Endothelial cell of umbilical vein (primary cell): ENCODE measurements at regions of chr2 and their contacts with region 1.

Region 1: GRCh38 chr2:158968396-158969161 is at the start of gene TANC1:
- DNase-seq: peak; percentile 90
- H3K4me3 ChIP-seq: peak within 1 kb of the TSS; percentile 80 to 89 (median 89)
- H3K27ac ChIP-seq: peak within 1 kb of the TSS; percentile 75
- H3K4me1 ChIP-seq: peaks cover 36% of the 10 kb centered on the region
- H3K27me3 ChIP-seq: no peaks in the 10 kb centered on the region
- CTCF ChIP-seq: no peak
- POLR2A ChIP-seq: peak; percentile 96
- total RNA-seq, gene TANC1: 86.3 and 99.4 TPM in 2 replicates

Region 2: GRCh38 chr2:158586491-158586890 is 382.1 kb before region 1 on chr2:
- CTCF ChIA-PET with region 1: no interaction called
- POLR2A ChIA-PET with region 1: no interaction called
- dilution Hi-C with region 1: no loop called
- intact Hi-C with region 1: no loop called
- DNase-seq: no peak
- H3K4me3 ChIP-seq: no peak overlapping the region
- H3K27ac ChIP-seq: no peak overlapping the region
- H3K4me1 ChIP-seq: no peaks in the 10 kb centered on the region
- H3K27me3 ChIP-seq: no peaks in the 10 kb centered on the region
- CTCF ChIP-seq: no peak
- POLR2A ChIP-seq: no peak

Region 3: GRCh38 chr2:158903711-158904443 is 64.7 kb before region 1 on chr2:
- CTCF ChIA-PET with region 1: interaction called, 5 read pairs
- POLR2A ChIA-PET with region 1: no interaction called
- dilution Hi-C with region 1: no loop called
- intact Hi-C with region 1: loop called (anchors 1 kb)
- DNase-seq: no peak
- H3K4me3 ChIP-seq: no peak overlapping the region
- H3K27ac ChIP-seq: no peak overlapping the region
- H3K4me1 ChIP-seq: no peaks in the 10 kb centered on the region
- H3K27me3 ChIP-seq: no peaks in the 10 kb centered on the region
- CTCF ChIP-seq: no peak
- POLR2A ChIP-seq: no peak

Region 4: DNA sequence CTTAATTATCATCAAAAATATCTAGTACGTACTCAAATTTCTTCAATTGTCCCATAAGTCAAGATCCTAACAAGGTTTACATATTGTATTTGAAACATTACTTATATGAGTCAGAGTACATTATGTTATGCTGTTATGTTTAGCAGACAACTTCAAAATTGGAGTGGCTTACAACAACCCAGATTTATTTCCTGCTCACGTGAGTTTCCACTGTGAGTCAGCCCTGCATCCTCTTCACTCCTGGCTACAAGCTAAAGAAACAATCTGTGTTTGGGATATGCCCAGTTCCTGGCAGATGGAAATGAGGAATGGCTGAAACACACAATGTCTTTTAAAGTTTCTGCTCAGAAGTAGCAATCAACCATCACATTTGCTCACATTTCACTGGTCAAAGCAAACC is 31.6 kb before region 1 on chr2:
- CTCF ChIA-PET with region 1: no interaction called
- POLR2A ChIA-PET with region 1: interaction called, 3 read pairs
- dilution Hi-C with region 1: no loop called
- intact Hi-C with region 1: loop called (anchors 1 kb)
- DNase-seq: peak; percentile 99
- H3K4me3 ChIP-seq: no peak overlapping the region
- H3K27ac ChIP-seq: peak overlapping the region; percentile 87
- H3K4me1 ChIP-seq: peaks cover 18% of the 10 kb centered on the region
- H3K27me3 ChIP-seq: no peaks in the 10 kb centered on the region
- CTCF ChIP-seq: no peak
- POLR2A ChIP-seq: no peak

Region 5: DNA sequence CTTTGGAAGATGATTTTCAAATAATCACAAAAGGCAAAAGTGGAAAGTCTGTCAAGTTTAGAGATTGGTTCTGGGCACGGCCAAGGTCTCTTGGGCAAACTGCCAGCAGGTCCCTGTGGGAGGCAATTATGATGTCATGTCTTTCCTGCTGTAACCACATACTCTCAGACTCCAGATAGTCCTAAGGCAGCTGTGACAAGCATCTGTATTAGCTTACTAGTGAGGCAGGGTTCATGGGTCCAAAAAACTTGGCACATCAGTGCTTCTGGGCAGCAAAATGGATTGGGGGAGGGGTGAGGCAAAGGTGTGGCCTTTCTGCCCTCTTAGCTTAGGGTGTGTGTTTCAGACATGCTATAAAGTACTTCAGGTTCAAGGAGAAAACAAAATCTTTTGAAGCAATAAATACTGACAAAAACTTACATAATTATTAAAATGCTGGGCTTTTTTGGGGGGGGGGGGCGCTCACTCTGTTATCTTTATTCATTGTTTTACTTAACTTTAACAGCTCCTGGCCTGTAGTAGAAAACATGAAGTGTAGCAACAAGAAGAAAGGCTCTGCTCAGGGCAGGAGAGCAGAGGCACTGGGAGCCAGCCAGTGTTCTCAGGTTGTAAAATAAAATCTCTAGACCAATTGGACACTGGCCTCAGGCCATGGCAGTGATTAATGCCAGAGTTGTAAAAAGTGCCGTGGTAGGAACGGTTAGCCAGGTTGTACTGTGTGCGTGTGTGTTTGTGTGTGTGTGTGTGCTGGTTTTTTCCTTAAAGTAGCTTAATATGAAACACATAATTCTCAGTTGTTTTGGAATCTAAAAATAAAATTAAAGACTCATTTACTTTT is 14.4 kb before region 1 on chr2:
- CTCF ChIA-PET with region 1: interaction called, 14 read pairs
- POLR2A ChIA-PET with region 1: interaction called, 3 read pairs
- dilution Hi-C with region 1: no loop called
- intact Hi-C with region 1: loop called (anchors 1 kb)
- DNase-seq: peak; percentile 91
- H3K4me3 ChIP-seq: no peak overlapping the region
- H3K27ac ChIP-seq: peak overlapping the region; percentile 60
- H3K4me1 ChIP-seq: peaks cover 14% of the 10 kb centered on the region
- H3K27me3 ChIP-seq: no peaks in the 10 kb centered on the region
- CTCF ChIP-seq: no peak
- POLR2A ChIP-seq: no peak